MCF 10A (cell line): ENCODE measurements at regions of chr4 and their contacts with region 1.

Region 1: DNA sequence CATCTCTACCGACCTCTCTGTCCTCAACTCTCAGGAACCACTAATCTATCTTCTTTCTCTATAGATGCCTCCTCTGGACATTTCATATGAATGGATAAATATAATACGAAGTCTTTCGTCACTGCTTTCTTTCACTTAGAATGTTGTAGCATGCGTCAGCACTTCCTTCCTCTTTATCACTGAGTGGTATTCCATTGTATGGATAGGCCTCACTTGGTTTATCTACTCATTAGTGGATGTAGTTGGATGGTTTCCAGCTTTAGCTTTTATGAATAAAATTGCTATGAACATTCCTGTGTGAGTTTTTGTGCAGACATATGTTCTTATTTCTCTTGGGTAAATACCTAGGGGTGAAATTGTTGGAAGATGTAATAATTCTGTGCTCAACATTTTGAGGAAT is 528.2 kb upstream of the FAT1 start:
- DNase-seq: no peak
- H3K4me3 Mint-ChIP-seq: no peak overlapping the region
- H3K27ac Mint-ChIP-seq: no peak overlapping the region
- H3K4me1 Mint-ChIP-seq: no peaks in the 10 kb centered on the region
- H3K27me3 Mint-ChIP-seq: no peaks in the 10 kb centered on the region
- CTCF ChIP-seq: no peak

Region 2: DNA sequence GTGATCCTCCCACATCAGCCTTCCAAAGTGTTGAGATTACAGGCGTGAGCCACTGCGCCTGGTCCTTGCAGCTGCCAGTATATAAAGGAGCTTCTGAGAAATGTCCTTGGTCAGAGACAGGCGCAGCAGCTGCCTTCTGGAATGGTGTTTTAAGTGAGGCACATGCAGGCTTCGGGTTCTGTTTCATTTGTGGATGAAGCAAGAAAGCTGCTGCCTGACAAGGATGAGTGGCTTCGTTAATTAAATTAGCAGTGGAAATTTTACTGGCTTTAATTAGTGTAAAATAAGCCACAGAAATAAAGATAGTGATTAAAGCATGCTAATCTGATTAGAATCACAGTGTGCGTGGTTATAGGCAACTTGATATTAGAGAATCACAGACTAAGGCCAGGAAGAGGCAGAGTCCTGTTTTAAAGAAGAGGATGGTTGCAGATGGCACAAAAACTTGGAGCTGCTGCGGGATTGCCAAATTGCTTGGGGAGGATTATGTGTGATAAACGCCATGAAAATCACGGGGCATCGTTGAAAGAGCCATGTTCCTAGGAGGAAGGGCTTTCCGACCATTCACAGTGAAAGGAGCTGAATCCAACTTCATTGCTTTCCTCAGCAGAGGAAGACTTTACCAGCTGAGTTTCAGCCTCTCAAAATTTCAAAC is 179.8 kb before region 1 on chr4:
- CTCF ChIA-PET with region 1: no interaction called
- POLR2A ChIA-PET with region 1: no interaction called
- intact Hi-C with region 1: no loop called
- DNase-seq: no peak
- H3K4me3 Mint-ChIP-seq: no peak overlapping the region
- H3K27ac Mint-ChIP-seq: no peak overlapping the region
- H3K4me1 Mint-ChIP-seq: no peaks in the 10 kb centered on the region
- H3K27me3 Mint-ChIP-seq: no peaks in the 10 kb centered on the region
- CTCF ChIP-seq: no peak

Region 3: DNA sequence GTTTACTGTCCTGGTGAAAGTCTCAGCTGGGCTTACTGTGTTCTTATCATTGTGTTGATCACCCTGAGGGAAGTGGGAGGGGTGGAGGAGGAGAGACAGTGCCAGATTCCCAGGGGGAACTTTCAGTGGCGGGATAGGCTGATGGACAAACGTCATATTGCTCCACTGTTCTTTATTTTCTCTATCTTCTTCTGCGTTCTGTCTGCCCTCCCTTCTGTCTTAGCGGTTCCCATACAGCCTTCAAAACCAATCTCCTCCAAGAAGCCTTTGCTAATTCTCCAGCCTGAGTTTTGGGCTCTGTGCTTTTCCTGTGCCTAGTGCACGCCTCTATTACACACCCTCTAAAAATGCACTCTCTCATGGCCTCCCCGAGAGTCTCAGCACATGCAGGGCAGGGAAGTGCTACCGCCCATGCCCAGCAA is 79.5 kb before region 1 on chr4:
- CTCF ChIA-PET with region 1: no interaction called
- POLR2A ChIA-PET with region 1: no interaction called
- intact Hi-C with region 1: no loop called
- DNase-seq: peak; percentile 61
- H3K4me3 Mint-ChIP-seq: peak overlapping the region; percentile 69
- H3K27ac Mint-ChIP-seq: peak overlapping the region; percentile 75
- H3K4me1 Mint-ChIP-seq: peaks cover 18% of the 10 kb centered on the region
- H3K27me3 Mint-ChIP-seq: no peaks in the 10 kb centered on the region
- CTCF ChIP-seq: no peak

Region 4: GRCh38 chr4:187268940-187269339 is 17.0 kb after region 1 on chr4:
- CTCF ChIA-PET with region 1: no interaction called
- POLR2A ChIA-PET with region 1: no interaction called
- intact Hi-C with region 1: loop called (anchors 1 kb)
- DNase-seq: peak; percentile 22
- H3K4me3 Mint-ChIP-seq: no peak overlapping the region
- H3K27ac Mint-ChIP-seq: no peak overlapping the region
- H3K4me1 Mint-ChIP-seq: no peaks in the 10 kb centered on the region
- H3K27me3 Mint-ChIP-seq: no peaks in the 10 kb centered on the region
- CTCF ChIP-seq: no peak